ENCODE measurements at regions of chr15 and their contacts with region 1.

Region 1: DNA sequence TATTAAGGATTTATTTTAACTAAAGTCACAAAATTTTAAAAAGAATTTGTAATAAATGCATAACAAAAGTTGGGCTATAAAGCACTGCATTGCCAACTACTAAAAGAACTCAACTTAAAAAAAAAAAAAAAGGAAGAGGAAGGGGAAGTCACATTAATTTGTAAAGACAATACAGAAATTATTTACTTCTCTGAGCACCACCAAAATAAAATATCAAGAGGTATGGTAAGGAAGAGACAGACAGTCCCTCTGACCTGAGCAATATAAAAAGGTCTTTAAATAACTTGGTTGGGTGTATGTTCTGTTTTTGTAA is 83.5 kb downstream of the UACA start:
- DNase-seq: no peak
- ATAC-seq: no peak
- H3K4me3 ChIP-seq: no peak overlapping the region
- H3K27ac ChIP-seq: no peak overlapping the region
- H3K4me1 ChIP-seq: no peaks in the 10 kb centered on the region
- H3K27me3 ChIP-seq: no peaks in the 10 kb centered on the region; a peak in 1 of 4 replicates
- CTCF ChIP-seq: no peak
- EP300 ChIP-seq: no peak
- POLR2A ChIP-seq: no peak
- RAD21 ChIP-seq: no peak

Region 2: DNA sequence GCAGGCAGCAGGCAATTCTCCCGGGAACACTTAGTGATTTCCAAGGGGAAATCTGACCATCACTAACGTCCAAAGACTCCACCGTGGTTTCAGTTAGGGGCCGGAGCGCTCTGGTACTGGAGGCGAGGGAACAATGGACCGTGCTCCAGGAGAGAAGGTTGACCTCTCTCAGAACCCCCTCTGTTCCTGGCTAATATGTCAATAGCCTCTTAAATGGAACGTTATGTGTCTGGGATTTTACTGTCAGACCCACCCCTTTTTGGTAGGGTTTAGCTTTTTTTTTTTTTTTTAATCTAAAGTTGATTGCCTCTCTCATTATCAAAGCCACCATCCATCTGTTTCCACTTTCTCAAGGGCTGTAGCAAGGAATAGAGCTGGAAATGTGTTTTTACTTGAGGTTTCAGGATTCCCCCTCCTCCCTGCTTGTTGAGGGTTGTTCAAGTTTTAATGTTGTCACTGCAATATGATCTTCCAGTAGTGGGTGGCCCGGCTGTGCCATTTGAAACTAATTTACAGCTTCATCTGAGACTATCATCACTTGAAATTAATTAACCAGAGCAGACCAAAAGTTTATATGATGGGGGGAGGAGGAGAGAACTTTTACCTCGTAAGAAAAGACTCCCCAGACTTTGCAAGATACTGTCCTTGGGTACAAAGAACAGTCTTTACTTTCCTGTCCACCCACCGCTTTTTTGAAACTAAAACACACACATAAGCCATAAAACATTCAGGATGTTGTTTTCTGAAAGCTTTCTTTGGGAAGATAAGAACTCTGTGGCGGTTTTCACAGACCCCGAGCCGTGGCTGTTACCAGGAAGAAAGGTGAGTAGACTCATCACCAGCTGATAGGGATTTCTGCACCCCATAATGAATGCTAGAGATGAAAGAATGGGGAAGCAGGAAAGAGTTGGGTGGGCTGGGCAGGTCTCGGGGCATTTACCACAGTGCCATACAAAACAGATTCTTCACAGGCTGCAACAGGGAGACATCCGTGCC is 104.3 kb before region 1 on chr15:
- CTCF ChIA-PET with region 1: no interaction called
- POLR2A ChIA-PET with region 1: no interaction called
- RAD21 ChIA-PET with region 1: no interaction called
- SMC1A ChIA-PET with region 1: no interaction called
- in situ Hi-C with region 1: no loop called
- intact Hi-C with region 1: no loop called
- DNase-seq: no peak
- ATAC-seq: no peak
- H3K4me3 ChIP-seq: no peak overlapping the region
- H3K27ac ChIP-seq: no peak overlapping the region
- H3K4me1 ChIP-seq: no peaks in the 10 kb centered on the region
- H3K27me3 ChIP-seq: no peaks in the 10 kb centered on the region
- CTCF ChIP-seq: no peak
- EP300 ChIP-seq: no peak
- POLR2A ChIP-seq: no peak
- RAD21 ChIP-seq: no peak

Region 3: DNA sequence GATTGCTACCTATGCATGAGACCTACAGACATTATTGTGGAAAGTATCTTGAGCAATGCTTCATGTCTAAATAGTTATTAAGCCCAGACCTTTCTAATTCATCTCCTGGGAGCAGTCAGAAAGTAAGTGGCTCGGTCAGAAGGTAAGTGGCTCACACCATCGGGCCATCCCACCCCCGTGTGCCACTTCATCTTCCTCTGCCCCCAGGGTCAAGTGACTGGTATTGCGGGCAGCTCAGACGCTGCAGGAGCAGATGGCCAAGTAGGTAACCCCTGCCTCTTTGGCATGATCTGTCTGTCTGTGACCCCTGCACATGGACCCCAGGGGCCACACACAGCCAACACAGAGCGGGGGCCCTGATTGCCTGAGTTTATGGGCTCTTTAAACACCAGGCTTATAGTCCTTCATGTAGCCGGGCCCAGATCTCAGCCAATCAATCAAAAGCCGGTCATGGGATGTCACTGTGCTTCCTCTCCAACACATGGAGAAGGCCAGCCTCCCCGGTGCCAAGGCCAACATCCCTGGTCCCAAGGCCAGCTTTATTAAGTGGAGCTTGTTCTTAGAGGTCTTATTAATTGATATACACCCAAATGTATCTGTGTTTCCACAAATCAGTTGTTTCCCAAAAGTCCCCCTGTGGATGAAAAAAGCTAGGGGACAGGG is 131.2 kb after region 1 on chr15:
- CTCF ChIA-PET with region 1: interaction called, 8 read pairs
- POLR2A ChIA-PET with region 1: no interaction called
- RAD21 ChIA-PET with region 1: no interaction called
- SMC1A ChIA-PET with region 1: interaction called, 3 read pairs
- in situ Hi-C with region 1: no loop called
- intact Hi-C with region 1: loop called (anchors 2 kb)
- DNase-seq: no peak
- ATAC-seq: no peak
- H3K4me3 ChIP-seq: no peak overlapping the region
- H3K27ac ChIP-seq: no peak overlapping the region
- H3K4me1 ChIP-seq: no peaks in the 10 kb centered on the region
- H3K27me3 ChIP-seq: no peaks in the 10 kb centered on the region; a peak in 1 of 4 replicates
- CTCF ChIP-seq: no peak
- EP300 ChIP-seq: no peak
- POLR2A ChIP-seq: no peak
- RAD21 ChIP-seq: no peak

Region 4: GRCh38 chr15:71962537-71962936 is 1282.7 kb after region 1 on chr15:
- CTCF ChIA-PET with region 1: no interaction called
- POLR2A ChIA-PET with region 1: no interaction called
- RAD21 ChIA-PET with region 1: no interaction called
- SMC1A ChIA-PET with region 1: no interaction called
- in situ Hi-C with region 1: no loop called
- intact Hi-C with region 1: no loop called
- DNase-seq: peak; percentile 1
- ATAC-seq: peak; percentile 62
- H3K4me3 ChIP-seq: no peak overlapping the region
- H3K27ac ChIP-seq: no peak overlapping the region
- H3K4me1 ChIP-seq: no peaks in the 10 kb centered on the region
- H3K27me3 ChIP-seq: no peaks in the 10 kb centered on the region
- CTCF ChIP-seq: no peak
- EP300 ChIP-seq: no peak
- POLR2A ChIP-seq: no peak
- RAD21 ChIP-seq: no peak

Measured in GM12878 (cell line).